Spleen (tissue), 13 donors: ENCODE measurements at regions of chr7 and their contacts with region 1.

Region 1: GRCh38 chr7:95686109-95686508 is 86.2 kb upstream of the DYNC1I1 start:
- DNase-seq: no peak
- H3K4me3 ChIP-seq: no peak overlapping the region
- H3K27ac ChIP-seq: no peak overlapping the region
- H3K4me1 ChIP-seq: peaks cover 5 to 27% (median 9%) of the 10 kb centered on the region in 6 donors
- H3K27me3 ChIP-seq: no peaks in the 10 kb centered on the region
- CTCF ChIP-seq: peak in 9 of 11 experiments; percentile 26 to 76 (median 46)
- POLR2A ChIP-seq: no peak

Region 2: GRCh38 chr7:95527033-95527775 is 158.9 kb before region 1 on chr7:
- intact Hi-C with region 1: loop called (anchors 5 kb)
- DNase-seq: peak; percentile 61
- H3K4me3 ChIP-seq: no peak overlapping the region
- H3K27ac ChIP-seq: no peak overlapping the region
- H3K4me1 ChIP-seq: peaks cover 0 to 31% (median 7%) of the 10 kb centered on the region in 6 donors
- H3K27me3 ChIP-seq: no peaks in the 10 kb centered on the region
- CTCF ChIP-seq: peak; percentile 62 to 88 (median 81)
- POLR2A ChIP-seq: no peak